ENCODE measurements at regions of chr20 and their contacts with region 1.

Region 1: GRCh38 chr20:32031007-32031958 is 20.8 kb upstream of the HCK start:
- DNase-seq: peak; percentile 90
- H3K4me3 ChIP-seq: peak overlapping the region; percentile 4 to 62 (median 26)
- H3K27ac ChIP-seq: peak overlapping the region in 5 of 8 donors; percentile 17 to 91 (median 52)
- H3K4me1 ChIP-seq: peaks cover 21 to 71% (median 58%) of the 10 kb centered on the region in 6 donors
- H3K27me3 ChIP-seq: peaks cover 0 to 29% (median 0%) of the 10 kb centered on the region in 7 donors
- CTCF ChIP-seq: peak; percentile 89 to 97 (median 95)
- POLR2A ChIP-seq: no peak

Region 2: GRCh38 chr20:31853481-31853880 is 177.8 kb before region 1 on chr20:
- intact Hi-C with region 1: loop called (anchors 2 kb)
- DNase-seq: peak; percentile 59
- H3K4me3 ChIP-seq: no peak overlapping the region
- H3K27ac ChIP-seq: no peak overlapping the region
- H3K4me1 ChIP-seq: peaks cover 0 to 14% (median 8%) of the 10 kb centered on the region in 6 donors
- H3K27me3 ChIP-seq: peaks cover 0 to 37% (median 4%) of the 10 kb centered on the region in 7 donors
- CTCF ChIP-seq: no peak
- POLR2A ChIP-seq: no peak

Region 3: DNA sequence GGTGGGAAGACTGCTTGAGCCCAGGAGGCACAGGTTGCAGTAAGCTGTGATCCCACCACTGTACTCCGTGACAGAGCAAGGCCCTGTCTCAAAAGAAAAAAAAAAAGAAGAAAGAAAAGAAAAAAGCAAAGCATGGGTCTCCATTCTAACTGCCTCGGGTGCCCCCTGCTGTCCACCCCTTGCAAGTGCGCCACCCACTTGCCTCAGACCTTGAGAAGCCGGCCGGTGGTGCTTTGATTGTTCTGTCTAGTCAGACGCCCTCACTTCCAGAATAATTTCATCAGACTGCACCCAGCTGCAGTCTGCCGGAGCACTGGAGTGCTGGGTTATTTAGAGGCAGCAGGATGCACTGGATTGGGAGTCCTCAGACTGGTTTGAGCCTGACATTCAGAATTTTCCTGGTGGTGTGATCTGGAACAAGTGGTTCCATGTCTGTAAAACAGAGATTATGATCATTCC is 60.6 kb after region 1 on chr20:
- intact Hi-C with region 1: loop called (anchors 5 kb)
- DNase-seq: peak; percentile 93
- H3K4me3 ChIP-seq: no peak overlapping the region
- H3K27ac ChIP-seq: peak overlapping the region in 1 of 8 donors; percentile 37
- H3K4me1 ChIP-seq: peaks cover 0 to 17% (median 8%) of the 10 kb centered on the region in 6 donors
- H3K27me3 ChIP-seq: no peaks in the 10 kb centered on the region
- CTCF ChIP-seq: peak; percentile 88 to 98 (median 95)
- POLR2A ChIP-seq: no peak

Measured in spleen (tissue), 13 donors.